ENCODE measurements at regions of chr3 and their contacts with region 1.

Region 1: DNA sequence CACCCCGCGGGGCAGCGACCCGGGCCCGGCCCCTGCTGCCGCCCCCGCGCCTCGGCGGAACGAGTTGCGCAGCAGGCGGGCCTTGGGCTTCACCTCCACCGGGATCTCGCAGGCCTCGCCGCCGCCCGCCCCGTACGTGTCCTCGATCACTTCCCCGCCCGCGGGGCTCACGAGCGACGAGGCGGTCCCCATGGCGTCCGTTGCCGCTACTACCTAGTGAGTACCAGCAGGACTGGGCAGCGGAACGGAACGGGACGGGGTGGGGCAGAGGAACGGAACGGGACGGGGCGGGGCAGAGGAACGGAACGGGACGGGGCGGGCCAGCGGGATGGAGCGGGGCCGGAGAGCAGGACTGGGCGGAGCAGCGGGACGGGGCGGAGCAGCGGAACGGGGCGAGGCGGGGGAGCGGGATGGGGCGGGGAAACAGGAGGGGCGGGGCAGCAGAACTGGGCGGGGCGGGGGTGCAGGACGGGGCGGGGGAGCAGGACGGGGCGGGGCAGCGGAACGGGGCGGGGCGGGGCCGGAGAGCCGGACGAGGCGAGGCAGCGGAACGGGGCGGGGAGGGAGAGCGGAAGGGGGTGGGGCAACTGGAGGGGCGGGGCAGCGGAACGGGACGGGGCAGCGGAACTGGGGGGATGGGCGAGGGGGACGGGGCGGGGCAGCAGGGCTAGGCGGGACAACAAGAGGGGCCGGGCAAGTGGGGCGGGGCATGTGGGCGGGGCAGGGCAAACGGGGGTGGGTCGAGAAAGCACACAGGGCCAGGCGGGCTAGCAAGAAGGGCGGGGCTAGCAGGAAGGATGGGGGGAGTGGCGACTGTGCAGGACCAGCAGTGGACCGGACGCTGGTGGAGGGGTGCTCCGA is at the start of gene NPHP3:
- DNase-seq: peak; percentile 96 to 99 (median 98)
- H3K4me3 ChIP-seq: peak within 1 kb of the TSS; percentile 86
- H3K27ac ChIP-seq: peak within 1 kb of the TSS; percentile 65 to 96
- H3K4me1 ChIP-seq: peaks cover 2% of the 10 kb centered on the region
- H3K27me3 ChIP-seq: no peaks in the 10 kb centered on the region
- CTCF ChIP-seq: peak in 1 of 3 donors; percentile 17
- EP300 ChIP-seq: no peak
- POLR2A ChIP-seq: peak; percentile 64
- total RNA-seq, gene NPHP3: 29.3 to 66.9 (median 37.5) TPM

Region 2: DNA sequence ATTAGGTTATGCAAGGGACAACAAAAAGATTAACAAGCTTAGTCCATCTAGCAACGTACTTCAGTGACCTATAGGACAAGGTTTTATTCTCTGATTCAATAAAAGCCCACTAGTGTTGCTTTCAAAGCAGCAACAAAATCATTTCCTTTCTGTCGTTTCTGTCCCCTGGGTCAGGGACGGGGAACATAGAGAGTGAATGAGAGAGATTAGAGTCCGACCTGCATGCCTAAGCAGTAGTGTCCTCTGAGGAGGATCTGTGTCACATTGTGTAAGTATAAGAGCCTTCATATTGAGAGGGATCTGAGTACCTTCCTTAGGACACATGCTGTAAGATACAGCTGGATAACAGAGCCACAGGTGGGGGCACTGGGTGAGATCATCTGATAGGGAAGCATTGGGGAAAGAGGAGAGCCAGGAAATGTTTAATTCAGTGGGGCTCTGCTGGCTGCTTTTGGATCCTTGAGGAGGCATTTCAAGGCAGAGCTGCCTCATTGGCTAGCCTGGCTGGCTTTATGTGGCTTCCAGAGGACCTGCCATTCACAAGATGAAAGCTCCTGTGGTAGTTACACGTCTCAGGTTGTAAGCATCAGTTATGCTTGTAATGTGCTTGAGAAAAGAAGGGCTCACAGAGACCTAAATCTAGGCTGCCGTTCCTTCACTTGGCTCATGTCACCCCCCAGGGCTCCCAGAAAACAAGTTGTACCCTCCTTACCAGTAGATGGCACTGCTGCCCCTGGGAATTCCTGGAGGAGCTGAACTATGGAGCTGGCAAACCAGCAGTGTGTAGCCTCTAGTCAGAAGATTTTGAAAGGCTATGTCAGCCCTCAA is 318.5 kb after region 1 on chr3:
- intact Hi-C with region 1: loop called in 1 of 4 experiments (anchors 10 kb)
- DNase-seq: peak in 4 of 5 donors; percentile 9 to 40 (median 36)
- H3K4me3 ChIP-seq: no peak overlapping the region
- H3K27ac ChIP-seq: no peak overlapping the region
- H3K4me1 ChIP-seq: no peaks in the 10 kb centered on the region
- H3K27me3 ChIP-seq: no peaks in the 10 kb centered on the region
- CTCF ChIP-seq: peak in 1 of 3 donors; percentile 17
- EP300 ChIP-seq: no peak
- POLR2A ChIP-seq: no peak

Region 3: DNA sequence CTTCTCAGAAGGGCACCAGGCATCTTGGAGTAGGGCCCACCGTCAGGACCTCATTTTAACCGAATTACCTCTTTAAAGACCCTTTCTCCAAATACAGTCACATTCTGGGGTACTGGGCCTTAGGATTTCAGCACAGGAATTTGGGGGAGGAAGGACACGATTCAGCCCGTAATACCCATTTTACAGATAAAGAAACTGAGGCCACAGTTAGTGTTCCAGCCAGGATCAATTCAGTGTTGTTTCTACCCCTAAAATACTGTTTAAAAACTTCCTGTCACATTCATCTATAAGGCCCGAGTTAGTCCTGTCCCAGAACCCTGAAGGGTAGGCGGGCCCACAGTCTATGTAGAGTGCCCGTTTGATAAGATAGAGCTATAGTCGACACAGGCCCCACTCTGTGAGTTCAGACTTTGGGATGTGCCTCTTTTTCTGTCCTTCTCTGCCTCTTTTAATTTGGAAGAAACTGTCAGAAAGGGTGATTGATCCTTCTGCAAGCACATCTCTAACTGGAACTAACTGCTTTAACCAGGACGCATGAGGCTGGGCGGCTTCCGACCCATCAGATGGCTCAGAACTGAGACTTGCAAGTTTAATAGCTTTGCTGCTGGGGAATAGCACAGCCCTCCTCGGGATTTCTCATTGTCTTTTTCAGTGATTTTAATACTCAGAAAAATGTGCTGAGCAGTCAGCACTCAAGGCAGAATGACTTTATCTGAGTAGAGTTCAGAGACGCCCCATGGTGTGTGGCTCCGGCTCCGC is 696.9 kb after region 1 on chr3:
- intact Hi-C with region 1: loop called in 2 of 4 experiments (anchors 5 kb)
- DNase-seq: no peak
- H3K4me3 ChIP-seq: no peak overlapping the region
- H3K27ac ChIP-seq: no peak overlapping the region
- H3K4me1 ChIP-seq: no peaks in the 10 kb centered on the region
- H3K27me3 ChIP-seq: no peaks in the 10 kb centered on the region
- CTCF ChIP-seq: no peak
- EP300 ChIP-seq: no peak
- POLR2A ChIP-seq: no peak

Region 4: DNA sequence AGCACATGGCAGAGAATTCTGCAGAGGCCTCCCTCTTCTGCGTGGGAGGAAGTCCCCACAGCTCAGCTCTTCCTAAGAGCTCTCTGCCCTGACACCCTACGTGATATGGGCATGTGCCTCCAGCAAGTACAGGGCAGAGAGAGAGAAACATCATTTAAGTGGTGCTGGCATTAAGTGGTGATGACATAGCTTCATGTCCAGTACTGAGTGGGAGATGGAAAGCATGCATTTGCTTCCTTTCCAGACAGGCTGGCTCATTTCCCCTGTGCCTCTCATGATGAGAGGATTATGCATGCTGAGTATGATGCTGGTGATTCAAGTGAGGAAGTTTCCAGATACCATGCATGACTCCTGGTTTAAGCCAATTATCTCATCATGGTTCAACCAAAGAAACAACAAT is 704.3 kb after region 1 on chr3:
- intact Hi-C with region 1: loop called in 1 of 4 experiments (anchors 5 kb)
- DNase-seq: no peak
- H3K4me3 ChIP-seq: no peak overlapping the region
- H3K27ac ChIP-seq: no peak overlapping the region
- H3K4me1 ChIP-seq: no peaks in the 10 kb centered on the region
- H3K27me3 ChIP-seq: no peaks in the 10 kb centered on the region
- CTCF ChIP-seq: no peak
- EP300 ChIP-seq: no peak
- POLR2A ChIP-seq: no peak

Measured in ovary (tissue), 10 donors.